ENCODE measurements at regions of chr11 and their contacts with region 1.

Region 1: GRCh38 chr11:355581-356458 is 13.5 kb upstream of the B4GALNT4 start:
- DNase-seq: peak; percentile 70
- ATAC-seq: peak; percentile 72
- H3K4me3 Mint-ChIP-seq: peak overlapping the region; percentile 77
- H3K27ac Mint-ChIP-seq: peak overlapping the region; percentile 90
- H3K4me1 Mint-ChIP-seq: peaks cover 26% of the 10 kb centered on the region
- H3K27me3 Mint-ChIP-seq: no peaks in the 10 kb centered on the region
- CTCF ChIP-seq: no peak

Region 2: GRCh38 chr11:250740-251299 is 105.0 kb before region 1 on chr11:
- CTCF ChIA-PET with region 1: interaction called, 26 read pairs
- POLR2A ChIA-PET with region 1: interaction called, 6 read pairs
- intact Hi-C with region 1: loop called (anchors 1 kb)
- DNase-seq: peak; percentile 60
- ATAC-seq: peak; percentile 96
- H3K4me3 Mint-ChIP-seq: no peak overlapping the region
- H3K27ac Mint-ChIP-seq: peak overlapping the region; percentile 36
- H3K4me1 Mint-ChIP-seq: peaks cover 2% of the 10 kb centered on the region
- H3K27me3 Mint-ChIP-seq: no peaks in the 10 kb centered on the region
- CTCF ChIP-seq: peak; percentile 29

Region 3: GRCh38 chr11:279966-280582 is 75.7 kb before region 1 on chr11:
- CTCF ChIA-PET with region 1: interaction called, 3 read pairs
- POLR2A ChIA-PET with region 1: interaction called, 15 read pairs
- intact Hi-C with region 1: no loop called
- DNase-seq: peak; percentile 43
- ATAC-seq: peak; percentile 71
- H3K4me3 Mint-ChIP-seq: peak overlapping the region; percentile 74
- H3K27ac Mint-ChIP-seq: no peak overlapping the region
- H3K4me1 Mint-ChIP-seq: peaks cover 32% of the 10 kb centered on the region
- H3K27me3 Mint-ChIP-seq: peaks cover 19% of the 10 kb centered on the region
- CTCF ChIP-seq: no peak

Region 4: GRCh38 chr11:288328-289144 is 67.3 kb before region 1 on chr11 and contains the start of gene PGGHG:
- CTCF ChIA-PET with region 1: no interaction called
- POLR2A ChIA-PET with region 1: interaction called, 15 read pairs
- intact Hi-C with region 1: no loop called
- DNase-seq: peak; percentile 78
- ATAC-seq: peak; percentile 88
- H3K4me3 Mint-ChIP-seq: peak within 1 kb of the TSS; percentile 82
- H3K27ac Mint-ChIP-seq: peak within 1 kb of the TSS; percentile 41
- H3K4me1 Mint-ChIP-seq: peaks cover 17% of the 10 kb centered on the region
- H3K27me3 Mint-ChIP-seq: peaks cover 12% of the 10 kb centered on the region
- CTCF ChIP-seq: no peak
- total RNA-seq, gene PGGHG: 62.3 and 74.1 TPM in 2 replicates

Region 5: GRCh38 chr11:313787-314547 is 41.9 kb before region 1 on chr11 and contains the start of gene IFITM1:
- CTCF ChIA-PET with region 1: interaction called, 3 read pairs
- POLR2A ChIA-PET with region 1: interaction called, 22 read pairs
- intact Hi-C with region 1: loop called (anchors 2 kb)
- DNase-seq: peak; percentile 42
- ATAC-seq: peak; percentile 16
- H3K4me3 Mint-ChIP-seq: peak within 1 kb of the TSS; percentile 81
- H3K27ac Mint-ChIP-seq: peak within 1 kb of the TSS; percentile 89
- H3K4me1 Mint-ChIP-seq: peaks cover 60% of the 10 kb centered on the region
- H3K27me3 Mint-ChIP-seq: no peaks in the 10 kb centered on the region
- CTCF ChIP-seq: no peak
- total RNA-seq, gene IFITM1: 21.2 and 25.3 TPM in 2 replicates

Region 6: DNA sequence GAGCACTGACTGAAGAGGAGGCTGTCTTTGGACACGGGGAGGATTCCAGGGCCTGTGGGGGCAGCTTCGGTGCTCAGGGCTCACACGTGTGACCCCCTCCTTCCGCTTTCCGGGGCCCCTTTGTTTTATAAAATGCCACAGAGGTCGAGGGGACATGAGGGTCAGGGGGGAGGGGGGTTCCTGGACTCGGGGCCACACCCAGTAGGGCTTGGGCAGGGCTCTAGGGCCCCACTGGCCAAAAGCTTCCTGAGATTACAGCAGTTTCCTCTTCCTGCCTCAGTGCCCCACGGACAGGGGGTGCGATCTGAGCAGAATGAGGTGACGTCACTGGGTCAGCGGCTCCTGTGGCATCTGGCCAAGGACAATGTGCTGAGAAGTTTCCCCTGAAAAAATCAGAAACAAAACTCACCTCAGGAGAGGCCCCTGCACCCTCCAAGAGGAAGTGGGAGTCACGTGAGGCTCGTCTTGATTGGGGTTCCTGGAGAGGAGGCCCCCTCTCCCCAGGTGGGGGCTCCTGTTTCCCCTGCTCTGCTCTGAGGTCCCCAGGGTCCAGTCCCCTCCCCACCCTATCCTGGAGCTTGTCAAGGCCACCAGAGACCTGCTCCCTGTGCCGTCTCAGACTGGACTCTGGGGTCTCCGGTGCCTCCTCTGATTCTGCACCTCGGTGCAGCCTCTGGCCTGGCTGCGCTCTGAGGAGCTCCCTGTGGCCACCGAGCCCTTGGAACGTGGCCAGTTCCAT is 28.8 kb before region 1 on chr11:
- CTCF ChIA-PET with region 1: interaction called, 3 read pairs
- POLR2A ChIA-PET with region 1: interaction called, 25 read pairs
- intact Hi-C with region 1: no loop called
- DNase-seq: peak; percentile 46
- ATAC-seq: peak; percentile 65
- H3K4me3 Mint-ChIP-seq: peak overlapping the region; percentile 53
- H3K27ac Mint-ChIP-seq: peak overlapping the region; percentile 92
- H3K4me1 Mint-ChIP-seq: peaks cover 56% of the 10 kb centered on the region
- H3K27me3 Mint-ChIP-seq: no peaks in the 10 kb centered on the region
- CTCF ChIP-seq: no peak

Region 7: GRCh38 chr11:456533-456932 is 100.7 kb after region 1 on chr11:
- CTCF ChIA-PET with region 1: no interaction called
- POLR2A ChIA-PET with region 1: no interaction called
- intact Hi-C with region 1: no loop called
- DNase-seq: no peak
- ATAC-seq: peak; percentile 64
- H3K4me3 Mint-ChIP-seq: no peak overlapping the region
- H3K27ac Mint-ChIP-seq: peak overlapping the region; percentile 41
- H3K4me1 Mint-ChIP-seq: peaks cover 31% of the 10 kb centered on the region
- H3K27me3 Mint-ChIP-seq: no peaks in the 10 kb centered on the region
- CTCF ChIP-seq: no peak